ENCODE measurements at regions of chr1 and their contacts with region 1.

Region 1: GRCh38 chr1:229479660-229480399 is 28.3 kb downstream of the NUP133 start:
- DNase-seq: peak; percentile 58
- ATAC-seq: peak; percentile 82
- H3K4me3 ChIP-seq: no peak overlapping the region; the same call in 1 of the 2 replicates
- H3K27ac ChIP-seq: peak overlapping the region; percentile 65
- H3K4me1 ChIP-seq: peaks cover 31% of the 10 kb centered on the region
- H3K27me3 ChIP-seq: no peaks in the 10 kb centered on the region
- CTCF ChIP-seq: no peak
- EP300 ChIP-seq: no peak
- POLR2A ChIP-seq: no peak
- RAD21 ChIP-seq: no peak

Region 2: GRCh38 chr1:229258031-229258756 is 221.6 kb before region 1 on chr1:
- CTCF ChIA-PET with region 1: interaction called, 214 read pairs
- POLR2A ChIA-PET with region 1: interaction called, 4 read pairs
- RAD21 ChIA-PET with region 1: interaction called, 77 read pairs
- SMC1A ChIA-PET with region 1: interaction called, 121 read pairs
- in situ Hi-C with region 1: loop called (anchors 5 kb)
- intact Hi-C with region 1: loop called (anchors 1 kb)
- DNase-seq: no peak
- ATAC-seq: peak; percentile 85
- H3K4me3 ChIP-seq: no peak overlapping the region
- H3K27ac ChIP-seq: no peak overlapping the region
- H3K4me1 ChIP-seq: 0 out of 2 replicates have a peak, but pooled peaks cover under 1% of the 10 kb centered on the region
- H3K27me3 ChIP-seq: no peaks in the 10 kb centered on the region
- CTCF ChIP-seq: peak; percentile 59 to 77 (median 76)
- EP300 ChIP-seq: no peak
- POLR2A ChIP-seq: no peak
- RAD21 ChIP-seq: peak; percentile 93

Region 3: DNA sequence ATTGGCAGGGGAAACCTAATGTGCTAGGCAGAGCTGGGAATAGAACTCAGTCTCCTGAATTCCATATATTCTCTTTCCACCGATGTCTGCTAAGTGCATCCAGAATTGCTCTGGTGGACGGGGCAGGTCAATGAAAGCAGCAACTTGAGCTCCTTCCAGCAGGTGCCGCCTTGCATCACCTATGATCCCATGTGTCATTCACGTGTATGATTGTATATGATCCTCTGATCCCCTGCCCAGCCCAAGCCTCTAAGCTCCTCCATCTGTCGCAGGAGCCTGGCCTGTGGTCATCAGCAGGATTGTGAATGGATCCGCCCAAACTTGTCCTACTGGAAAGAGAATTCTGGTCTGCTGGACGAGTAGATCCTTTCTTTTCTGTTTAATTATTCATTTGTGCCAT is 59.1 kb before region 1 on chr1:
- CTCF ChIA-PET with region 1: interaction called, 15 read pairs
- POLR2A ChIA-PET with region 1: no interaction called
- RAD21 ChIA-PET with region 1: interaction called, 3 read pairs
- SMC1A ChIA-PET with region 1: interaction called, 17 read pairs
- in situ Hi-C with region 1: no loop called
- intact Hi-C with region 1: no loop called
- DNase-seq: no peak
- ATAC-seq: peak; percentile 48
- H3K4me3 ChIP-seq: no peak overlapping the region
- H3K27ac ChIP-seq: no peak overlapping the region
- H3K4me1 ChIP-seq: no peaks in the 10 kb centered on the region
- H3K27me3 ChIP-seq: peaks cover 0 to 5% of the 10 kb centered on the region in 2 experiments; a peak in 1 of 4 replicates
- CTCF ChIP-seq: peak in 1 of 3 experiments; percentile 14; a peak in 2 of 6 replicates
- EP300 ChIP-seq: no peak
- POLR2A ChIP-seq: no peak
- RAD21 ChIP-seq: no peak

Region 4: DNA sequence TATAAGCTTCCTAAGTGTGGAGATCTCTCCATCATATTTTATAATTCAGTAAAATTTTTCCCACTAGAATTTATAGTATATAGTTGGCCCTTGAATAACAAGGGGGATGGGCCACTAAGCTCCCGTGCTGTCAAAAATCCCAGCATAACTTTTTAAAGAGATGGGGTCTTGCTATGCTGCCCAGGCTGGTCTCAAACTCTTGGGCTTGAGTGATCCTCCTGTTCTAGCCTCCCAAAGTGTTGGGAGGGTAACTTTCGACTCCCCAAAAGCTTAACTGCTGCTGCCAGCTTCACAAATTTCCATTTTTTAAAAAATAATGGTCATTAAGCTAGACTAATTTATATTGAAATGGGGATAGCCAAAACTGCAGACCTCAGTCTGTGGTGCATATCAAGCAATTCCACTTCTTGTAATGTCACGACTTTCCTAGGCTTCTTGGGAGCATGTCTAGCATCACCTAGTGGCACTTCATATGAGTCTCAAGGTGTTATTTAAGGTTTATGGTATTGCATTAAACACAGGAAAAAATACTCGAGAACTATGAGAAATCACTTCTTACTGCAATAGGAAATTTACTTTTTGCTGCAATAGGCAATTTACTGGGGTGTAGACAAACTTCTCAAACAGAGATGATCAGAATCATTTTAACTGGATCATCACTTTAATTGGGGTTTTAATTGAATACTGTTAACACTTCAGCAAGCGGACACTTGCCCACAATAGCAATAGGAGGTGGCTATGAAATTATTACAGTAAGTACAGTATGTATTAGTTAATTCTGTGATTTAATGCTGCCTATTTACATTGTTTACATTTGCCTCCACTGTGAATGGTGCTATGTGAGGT is 26.7 kb before region 1 on chr1:
- CTCF ChIA-PET with region 1: interaction called, 10 read pairs
- POLR2A ChIA-PET with region 1: no interaction called
- RAD21 ChIA-PET with region 1: no interaction called
- SMC1A ChIA-PET with region 1: interaction called, 4 read pairs
- in situ Hi-C with region 1: no loop called
- intact Hi-C with region 1: no loop called
- DNase-seq: no peak
- ATAC-seq: peak; percentile 38; the same call in 1 of the 3 replicates
- H3K4me3 ChIP-seq: no peak overlapping the region
- H3K27ac ChIP-seq: no peak overlapping the region
- H3K4me1 ChIP-seq: no peaks in the 10 kb centered on the region
- H3K27me3 ChIP-seq: no peaks in the 10 kb centered on the region
- CTCF ChIP-seq: peak; percentile 34 to 54 (median 41); a peak in 5 of 6 replicates
- EP300 ChIP-seq: no peak
- POLR2A ChIP-seq: no peak
- RAD21 ChIP-seq: peak; percentile 52

Region 5: DNA sequence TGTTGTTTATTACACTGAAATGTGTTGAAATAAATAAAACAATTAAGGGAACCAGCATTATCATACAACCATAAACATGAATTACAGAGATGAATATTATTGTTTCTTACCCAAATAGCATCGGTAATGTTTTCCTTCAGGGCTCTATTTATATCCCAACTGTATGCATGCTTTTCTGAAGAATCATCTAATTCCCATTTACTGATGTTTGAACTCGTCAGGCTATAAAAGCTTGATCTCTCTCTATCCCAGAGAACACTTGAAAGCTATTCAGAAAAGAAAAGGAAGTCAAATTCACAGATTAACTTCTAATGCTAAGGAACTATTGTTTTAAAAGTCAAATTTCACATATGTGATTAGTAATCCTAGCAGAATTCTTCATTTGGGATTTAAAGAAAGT is 16.0 kb after region 1 on chr1:
- CTCF ChIA-PET with region 1: interaction called, 18 read pairs
- POLR2A ChIA-PET with region 1: no interaction called
- RAD21 ChIA-PET with region 1: interaction called, 4 read pairs
- SMC1A ChIA-PET with region 1: interaction called, 8 read pairs
- in situ Hi-C with region 1: no loop called
- intact Hi-C with region 1: no loop called
- DNase-seq: no peak
- ATAC-seq: no peak
- H3K4me3 ChIP-seq: no peak overlapping the region
- H3K27ac ChIP-seq: no peak overlapping the region
- H3K4me1 ChIP-seq: no peaks in the 10 kb centered on the region
- H3K27me3 ChIP-seq: no peaks in the 10 kb centered on the region
- CTCF ChIP-seq: no peak
- EP300 ChIP-seq: no peak
- POLR2A ChIP-seq: no peak
- RAD21 ChIP-seq: no peak

Region 6: GRCh38 chr1:229514578-229515275 is 34.9 kb after region 1 on chr1:
- CTCF ChIA-PET with region 1: interaction called, 13 read pairs
- POLR2A ChIA-PET with region 1: no interaction called
- RAD21 ChIA-PET with region 1: interaction called, 3 read pairs
- SMC1A ChIA-PET with region 1: interaction called, 7 read pairs
- in situ Hi-C with region 1: no loop called
- intact Hi-C with region 1: no loop called
- DNase-seq: no peak
- ATAC-seq: peak; percentile 91
- H3K4me3 ChIP-seq: no peak overlapping the region
- H3K27ac ChIP-seq: no peak overlapping the region
- H3K4me1 ChIP-seq: no peaks in the 10 kb centered on the region; the same call in 1 of the 2 replicates
- H3K27me3 ChIP-seq: no peaks in the 10 kb centered on the region
- CTCF ChIP-seq: peak; percentile 75 to 83 (median 82)
- EP300 ChIP-seq: no peak
- POLR2A ChIP-seq: no peak
- RAD21 ChIP-seq: peak; percentile 58